Activated CD4-positive, alpha-beta memory T cell treated with anti-CD3 and anti-CD28 coated beads, Interleukin-2, amount 10 ng/mL, durations not matched to agents 7 days and 5 days (primary cell): ENCODE measurements at regions of chr11 and their contacts with region 1.

Region 1: GRCh38 chr11:118592616-118593367 is 14.6 kb upstream of the PHLDB1 start:
- DNase-seq: no peak
- H3K4me3 Mint-ChIP-seq: no peak overlapping the region
- H3K27ac Mint-ChIP-seq: no peak overlapping the region
- H3K4me1 Mint-ChIP-seq: peaks cover 22% of the 10 kb centered on the region
- H3K27me3 Mint-ChIP-seq: no peaks in the 10 kb centered on the region

Region 2: GRCh38 chr11:118334745-118335144 is 258.0 kb before region 1 on chr11:
- CTCF ChIA-PET with region 1: no interaction called
- POLR2A ChIA-PET with region 1: no interaction called
- DNase-seq: no peak
- H3K4me3 Mint-ChIP-seq: no peak overlapping the region
- H3K27ac Mint-ChIP-seq: peak overlapping the region; percentile 44
- H3K4me1 Mint-ChIP-seq: peaks cover 40% of the 10 kb centered on the region
- H3K27me3 Mint-ChIP-seq: no peaks in the 10 kb centered on the region

Region 3: GRCh38 chr11:118610804-118611795 is 18.3 kb after region 1 on chr11:
- CTCF ChIA-PET with region 1: interaction called, 69 read pairs
- POLR2A ChIA-PET with region 1: interaction called, 3 read pairs
- DNase-seq: peak; percentile 82
- H3K4me3 Mint-ChIP-seq: peak overlapping the region; percentile 50
- H3K27ac Mint-ChIP-seq: no peak overlapping the region
- H3K4me1 Mint-ChIP-seq: peaks cover 26% of the 10 kb centered on the region
- H3K27me3 Mint-ChIP-seq: peaks cover 46% of the 10 kb centered on the region